MCF 10A (cell line): ENCODE measurements at regions of chr7 and their contacts with region 1.

Region 1: DNA sequence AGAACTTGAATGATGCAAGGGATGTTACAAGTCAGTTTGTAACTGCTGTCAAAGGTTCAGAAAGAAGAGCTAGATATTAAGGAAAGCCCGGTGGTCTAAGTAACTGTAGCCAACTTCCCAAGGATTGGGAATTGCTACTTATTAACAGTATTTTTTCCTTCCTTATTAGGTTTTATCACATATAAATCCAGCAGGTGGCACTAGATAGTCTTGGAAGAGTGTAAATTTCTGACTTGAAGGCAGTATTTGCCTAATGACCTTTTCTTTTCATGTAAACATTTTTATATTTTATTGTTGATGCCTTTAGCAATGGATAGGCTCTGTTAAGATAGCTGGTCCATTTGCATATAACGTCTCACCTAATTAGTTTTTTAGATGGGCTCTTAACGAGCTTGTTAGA is 51.2 kb downstream of the ANLN start:
- DNase-seq: peak; percentile 22
- H3K4me3 Mint-ChIP-seq: no peak overlapping the region
- H3K27ac Mint-ChIP-seq: no peak overlapping the region
- H3K4me1 Mint-ChIP-seq: no peaks in the 10 kb centered on the region
- H3K27me3 Mint-ChIP-seq: no peaks in the 10 kb centered on the region
- CTCF ChIP-seq: peak; percentile 24

Region 2: DNA sequence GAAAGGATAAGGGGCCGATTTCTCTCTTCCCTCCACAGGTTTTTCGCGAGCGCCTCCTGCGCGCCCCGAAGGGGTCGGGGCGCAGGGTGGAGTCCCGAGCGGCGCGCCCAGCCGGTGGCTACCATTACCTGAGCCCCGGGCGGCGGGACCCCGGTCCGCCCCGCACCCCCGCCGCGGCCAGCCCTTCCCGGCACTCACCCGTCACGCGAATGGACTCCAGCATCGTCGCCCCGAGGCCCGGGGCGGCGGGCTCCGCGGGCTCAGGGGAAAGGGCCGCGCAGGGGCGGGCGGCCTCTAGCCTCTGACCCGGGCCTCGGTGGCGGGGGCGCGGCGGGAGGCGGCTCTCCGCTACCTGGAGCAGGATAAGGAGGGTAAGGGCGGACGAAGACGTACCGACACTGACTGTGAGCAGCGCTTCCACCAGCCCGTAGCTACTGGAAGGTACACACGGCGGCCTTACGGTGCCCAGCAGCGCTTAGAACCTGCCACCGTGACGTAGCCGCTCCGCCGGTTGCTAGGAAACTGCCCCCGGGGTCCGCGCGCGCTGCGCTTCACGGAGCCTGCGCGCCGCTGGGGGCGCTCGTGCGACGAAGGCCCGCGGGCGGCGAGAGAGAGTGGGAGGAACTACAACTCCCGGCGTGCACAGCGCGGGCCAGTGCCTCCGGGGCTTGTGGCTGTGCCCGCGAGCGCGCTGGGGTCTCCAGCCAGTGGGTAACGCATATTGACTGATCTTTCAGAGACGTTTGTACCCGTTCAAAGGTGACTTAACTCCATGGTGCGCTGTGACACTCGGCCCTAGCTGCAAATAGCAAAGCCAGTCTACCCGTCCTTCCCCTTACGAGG is 73.9 kb before region 1 on chr7:
- CTCF ChIA-PET with region 1: interaction called, 22 read pairs
- POLR2A ChIA-PET with region 1: no interaction called
- intact Hi-C with region 1: no loop called
- DNase-seq: peak; percentile 87
- H3K4me3 Mint-ChIP-seq: peak overlapping the region; percentile 80
- H3K27ac Mint-ChIP-seq: peak overlapping the region; percentile 70
- H3K4me1 Mint-ChIP-seq: no peaks in the 10 kb centered on the region
- H3K27me3 Mint-ChIP-seq: no peaks in the 10 kb centered on the region
- CTCF ChIP-seq: peak; percentile 83

Region 3: GRCh38 chr7:36416251-36416650 is 24.6 kb before region 1 on chr7:
- CTCF ChIA-PET with region 1: interaction called, 19 read pairs
- POLR2A ChIA-PET with region 1: interaction called, 4 read pairs
- intact Hi-C with region 1: no loop called
- DNase-seq: no peak
- H3K4me3 Mint-ChIP-seq: no peak overlapping the region
- H3K27ac Mint-ChIP-seq: no peak overlapping the region
- H3K4me1 Mint-ChIP-seq: peaks cover 7% of the 10 kb centered on the region
- H3K27me3 Mint-ChIP-seq: no peaks in the 10 kb centered on the region
- CTCF ChIP-seq: no peak

Region 4: GRCh38 chr7:36456138-36456537 is 15.3 kb after region 1 on chr7:
- CTCF ChIA-PET with region 1: interaction called, 46 read pairs
- POLR2A ChIA-PET with region 1: interaction called, 5 read pairs
- intact Hi-C with region 1: no loop called
- DNase-seq: no peak
- H3K4me3 Mint-ChIP-seq: no peak overlapping the region
- H3K27ac Mint-ChIP-seq: no peak overlapping the region
- H3K4me1 Mint-ChIP-seq: no peaks in the 10 kb centered on the region
- H3K27me3 Mint-ChIP-seq: no peaks in the 10 kb centered on the region
- CTCF ChIP-seq: no peak

Region 5: GRCh38 chr7:36487756-36488336 is 47.0 kb after region 1 on chr7:
- CTCF ChIA-PET with region 1: interaction called, 29 read pairs
- POLR2A ChIA-PET with region 1: no interaction called
- intact Hi-C with region 1: no loop called
- DNase-seq: peak; percentile 74
- H3K4me3 Mint-ChIP-seq: no peak overlapping the region
- H3K27ac Mint-ChIP-seq: no peak overlapping the region
- H3K4me1 Mint-ChIP-seq: peaks cover 16% of the 10 kb centered on the region
- H3K27me3 Mint-ChIP-seq: no peaks in the 10 kb centered on the region
- CTCF ChIP-seq: peak; percentile 93

Region 6: GRCh38 chr7:37201003-37201875 is 760.4 kb after region 1 on chr7:
- CTCF ChIA-PET with region 1: interaction called, 174 read pairs
- POLR2A ChIA-PET with region 1: interaction called, 4 read pairs
- intact Hi-C with region 1: loop called (anchors 1 kb)
- DNase-seq: peak; percentile 79
- H3K4me3 Mint-ChIP-seq: no peak overlapping the region
- H3K27ac Mint-ChIP-seq: no peak overlapping the region
- H3K4me1 Mint-ChIP-seq: peaks cover 6% of the 10 kb centered on the region
- H3K27me3 Mint-ChIP-seq: no peaks in the 10 kb centered on the region
- CTCF ChIP-seq: peak; percentile 86